Pancreas (tissue), 10 donors: ENCODE measurements at regions of chr14 and their contacts with region 1.

Region 1: GRCh38 chr14:38867561-38868150 is 235.4 kb downstream of the SEC23A start:
- DNase-seq: peak in 5 of 6 donors; percentile 43 to 73 (median 59)
- ATAC-seq: peak; percentile 90 to 96 (median 92)
- H3K4me3 ChIP-seq: no peak overlapping the region
- H3K27ac ChIP-seq: no peak overlapping the region
- H3K4me1 ChIP-seq: peaks cover 6 to 13% (median 7%) of the 10 kb centered on the region in 3 donors
- H3K27me3 ChIP-seq: no peaks in the 10 kb centered on the region
- CTCF ChIP-seq: peak; percentile 44 to 72 (median 70)

Region 2: DNA sequence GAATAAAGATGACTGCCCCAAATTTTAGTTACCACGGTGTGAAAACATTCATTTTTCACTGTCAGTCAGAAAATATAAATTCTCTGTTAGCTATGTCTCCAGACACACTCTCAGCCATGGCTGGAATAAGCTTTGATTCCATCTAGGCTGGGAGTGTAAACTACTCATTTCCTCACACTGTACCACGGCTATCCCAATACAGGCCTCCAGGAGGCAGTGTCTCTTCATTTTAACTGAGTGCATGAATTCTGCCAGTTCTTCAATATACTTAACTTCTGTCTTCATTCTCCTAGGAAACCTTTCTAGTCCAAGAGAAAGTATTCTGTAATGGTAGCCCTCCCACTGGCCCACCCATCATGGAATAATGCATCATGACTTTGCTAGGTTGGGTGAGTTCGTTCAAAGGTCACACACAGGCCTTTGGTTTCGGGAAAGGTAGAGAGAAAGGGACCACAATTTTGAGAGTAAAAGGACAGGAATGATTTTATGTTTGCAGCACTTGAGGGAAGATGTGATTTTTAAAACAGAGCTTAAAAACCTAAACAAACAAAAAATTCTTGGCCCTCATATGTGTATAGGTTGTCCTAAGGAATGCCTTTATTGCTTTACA is 145.7 kb before region 1 on chr14:
- intact Hi-C with region 1: loop called in 2 of 3 experiments (anchors 5 to 10 kb)
- DNase-seq: peak in 5 of 6 donors; percentile 31 to 73 (median 46)
- ATAC-seq: peak; percentile 83 to 100 (median 92)
- H3K4me3 ChIP-seq: no peak overlapping the region
- H3K27ac ChIP-seq: no peak overlapping the region
- H3K4me1 ChIP-seq: peaks cover 0 to 4% (median 0%) of the 10 kb centered on the region in 3 donors
- H3K27me3 ChIP-seq: no peaks in the 10 kb centered on the region
- CTCF ChIP-seq: peak; percentile 58 to 75 (median 66)